PC-9 (cell line): ENCODE measurements at regions of chr1 and their contacts with region 1.

Region 1: DNA sequence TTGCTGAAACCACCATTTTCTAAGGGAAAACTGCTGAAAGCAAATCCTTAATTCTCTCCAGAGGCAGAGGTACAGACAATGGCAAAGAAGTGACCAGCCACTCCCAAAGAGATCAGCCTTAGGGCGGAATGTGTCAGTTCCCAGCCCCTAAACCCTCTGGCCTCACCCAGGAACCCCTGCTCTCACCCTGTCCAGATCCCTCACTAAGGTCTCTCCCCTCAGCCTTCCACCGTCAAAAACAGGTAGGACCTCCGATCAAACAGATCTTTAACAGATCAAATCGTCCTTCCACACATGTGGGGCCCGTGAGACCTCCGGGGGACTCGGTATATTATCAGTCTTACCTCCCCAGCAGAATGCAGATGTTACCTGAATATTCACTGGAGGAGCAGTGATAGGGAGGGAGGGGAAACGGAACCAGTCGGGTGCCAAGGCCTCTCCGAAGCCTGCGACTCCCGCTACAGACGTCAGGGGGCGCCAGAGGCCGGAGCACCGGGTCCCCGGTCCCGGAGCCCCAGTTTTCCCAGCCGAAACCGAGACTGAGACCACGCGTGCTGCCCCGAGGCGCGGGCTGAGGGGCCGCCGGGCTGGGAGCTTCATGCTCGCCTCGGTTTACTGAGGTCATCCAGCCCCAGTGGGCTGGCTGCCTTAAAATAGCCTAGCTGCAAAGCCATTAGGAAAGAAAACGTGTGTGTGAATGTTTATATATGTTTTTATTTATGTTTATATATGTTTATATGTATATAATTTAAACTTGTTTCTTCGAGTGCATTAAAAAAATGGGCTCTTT is 23.6 kb downstream of the GPA33 start:
- DNase-seq: peak; percentile 42 to 82
- H3K4me3 ChIP-seq: peak overlapping the region; percentile 55; the same call in 1 of the 2 replicates
- H3K27ac ChIP-seq: 0 out of 2 replicates have a peak overlapping the region, but pooled peaks have one; percentile 27
- H3K4me1 ChIP-seq: no peaks in the 10 kb centered on the region
- H3K27me3 ChIP-seq: no peaks in the 10 kb centered on the region
- CTCF ChIP-seq: peak; percentile 99

Region 2: GRCh38 chr1:167043752-167044488 is 22.6 kb before region 1 on chr1:
- CTCF ChIA-PET with region 1: no interaction called
- POLR2A ChIA-PET with region 1: no interaction called
- intact Hi-C with region 1: no loop called
- DNase-seq: peak; percentile 50 to 55
- H3K4me3 ChIP-seq: peak overlapping the region; percentile 47
- H3K27ac ChIP-seq: no peak overlapping the region
- H3K4me1 ChIP-seq: no peaks in the 10 kb centered on the region
- H3K27me3 ChIP-seq: peaks cover 15% of the 10 kb centered on the region
- CTCF ChIP-seq: no peak

Region 3: DNA sequence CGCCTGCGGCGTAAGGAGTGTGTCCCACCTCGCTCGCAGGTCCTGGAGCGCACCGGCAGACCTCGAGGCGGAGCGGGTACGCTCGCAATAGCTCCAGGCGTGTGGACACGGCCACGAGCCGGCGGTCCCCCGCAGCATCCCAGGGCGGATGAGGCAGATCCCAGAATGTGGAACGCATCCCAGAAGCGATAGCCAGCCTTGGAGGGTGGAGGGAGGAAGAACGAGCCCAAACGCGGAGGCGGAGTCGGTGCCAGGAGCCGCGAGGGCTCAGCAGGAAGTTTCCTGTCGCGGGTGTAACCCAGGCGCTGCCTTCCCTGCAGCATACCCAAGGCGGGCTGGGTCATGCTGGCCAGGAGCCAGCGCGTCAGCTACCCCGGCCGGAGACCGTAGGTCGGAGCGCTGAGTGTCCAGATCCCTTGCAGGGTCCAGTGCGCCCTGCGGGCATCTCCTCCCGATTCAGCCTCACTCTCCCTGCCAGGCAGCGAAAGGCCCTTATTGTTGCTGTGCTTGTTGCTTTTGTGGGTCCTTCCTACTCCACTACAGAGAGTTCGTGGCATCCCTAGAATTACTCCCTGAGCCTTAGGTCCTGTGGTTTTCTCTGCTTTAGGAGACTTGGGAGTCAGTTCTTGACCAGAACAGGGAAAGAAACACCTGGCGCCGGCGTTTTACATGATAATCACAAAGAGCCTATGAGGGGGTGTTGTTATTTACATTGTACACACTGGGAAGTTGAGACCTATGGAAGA is 55.0 kb after region 1 on chr1:
- CTCF ChIA-PET with region 1: interaction called, 10 read pairs
- POLR2A ChIA-PET with region 1: interaction called, 4 read pairs
- intact Hi-C with region 1: loop called (anchors 1 kb)
- DNase-seq: peak; percentile 76 to 88
- H3K4me3 ChIP-seq: peak overlapping the region; percentile 91
- H3K27ac ChIP-seq: peak overlapping the region; percentile 59
- H3K4me1 ChIP-seq: peaks cover 18% of the 10 kb centered on the region; the same call in 1 of the 2 replicates
- H3K27me3 ChIP-seq: no peaks in the 10 kb centered on the region
- CTCF ChIP-seq: no peak

Region 4: GRCh38 chr1:167270349-167271092 is 204.0 kb after region 1 on chr1:
- CTCF ChIA-PET with region 1: interaction called, 3 read pairs
- POLR2A ChIA-PET with region 1: no interaction called
- intact Hi-C with region 1: loop called (anchors 5 kb)
- DNase-seq: no peak
- H3K4me3 ChIP-seq: no peak overlapping the region
- H3K27ac ChIP-seq: no peak overlapping the region
- H3K4me1 ChIP-seq: no peaks in the 10 kb centered on the region
- H3K27me3 ChIP-seq: no peaks in the 10 kb centered on the region
- CTCF ChIP-seq: no peak

Region 5: GRCh38 chr1:167342846-167343245 is 276.3 kb after region 1 on chr1:
- CTCF ChIA-PET with region 1: no interaction called
- POLR2A ChIA-PET with region 1: no interaction called
- intact Hi-C with region 1: no loop called
- DNase-seq: no peak
- H3K4me3 ChIP-seq: no peak overlapping the region
- H3K27ac ChIP-seq: no peak overlapping the region
- H3K4me1 ChIP-seq: no peaks in the 10 kb centered on the region
- H3K27me3 ChIP-seq: no peaks in the 10 kb centered on the region
- CTCF ChIP-seq: peak; percentile 44; the same call in 1 of the 2 replicates

Region 6: DNA sequence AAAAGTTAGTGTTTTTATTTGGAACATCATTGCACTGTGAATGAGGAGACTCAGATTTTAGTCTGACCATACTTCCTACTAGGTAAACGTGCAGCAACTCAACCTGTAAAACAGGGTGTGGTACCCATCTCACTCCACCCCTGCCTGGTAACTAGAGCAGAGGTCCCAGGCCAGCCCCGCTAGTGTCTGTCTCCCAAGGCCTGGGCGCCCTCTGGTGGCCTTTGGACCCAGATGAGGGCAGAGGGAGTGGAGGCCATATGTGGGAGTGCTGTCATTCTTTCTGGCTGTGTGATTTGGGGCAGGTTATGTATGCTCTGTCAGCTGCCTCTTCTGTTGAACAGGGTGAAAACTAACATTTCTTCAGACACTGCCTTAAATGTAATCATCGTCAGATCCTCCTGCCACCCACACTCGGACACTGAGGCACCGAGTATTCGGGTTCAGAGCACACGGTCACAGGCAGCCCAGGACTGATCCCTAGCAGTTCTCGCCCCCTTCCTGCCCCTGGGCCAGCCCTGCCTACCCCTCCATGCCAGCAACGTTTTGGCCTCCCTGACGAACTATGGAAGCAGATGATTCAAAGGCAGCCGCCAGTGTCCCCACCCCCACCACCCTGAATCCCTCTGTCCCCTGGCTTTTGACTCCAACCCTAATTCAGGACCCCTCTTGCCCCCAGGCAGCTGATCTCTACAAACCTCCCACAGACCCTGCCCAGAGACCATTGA is 375.8 kb after region 1 on chr1:
- CTCF ChIA-PET with region 1: interaction called, 3 read pairs
- POLR2A ChIA-PET with region 1: no interaction called
- intact Hi-C with region 1: loop called (anchors 1 kb)
- DNase-seq: peak; percentile 92
- H3K4me3 ChIP-seq: 0 out of 2 replicates have a peak overlapping the region, but pooled peaks have one; percentile 3
- H3K27ac ChIP-seq: peak overlapping the region; percentile 52
- H3K4me1 ChIP-seq: peaks cover 21% of the 10 kb centered on the region
- H3K27me3 ChIP-seq: no peaks in the 10 kb centered on the region
- CTCF ChIP-seq: peak; percentile 91

Region 7: DNA sequence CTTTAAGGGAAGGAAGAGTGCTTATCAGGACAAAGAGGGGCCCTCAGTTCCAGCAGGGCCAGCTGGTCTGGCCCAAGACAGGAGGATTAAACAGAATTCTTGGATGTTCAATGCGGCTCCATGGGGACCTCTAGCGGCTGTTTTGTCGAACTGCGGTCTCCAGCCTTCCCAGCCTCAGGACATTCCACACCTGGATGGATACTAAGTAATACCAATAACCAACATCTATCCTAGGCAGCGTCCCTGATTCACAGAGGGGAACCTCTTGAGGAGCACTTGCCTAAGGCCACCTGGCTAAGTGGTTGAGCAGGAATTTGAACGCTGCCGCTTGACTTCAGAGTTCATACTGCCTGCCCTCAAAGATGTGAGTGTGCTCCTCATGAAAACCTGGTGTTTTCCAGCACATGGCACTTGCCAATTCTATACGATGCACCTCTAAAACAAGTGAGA is 467.3 kb after region 1 on chr1:
- CTCF ChIA-PET with region 1: interaction called, 3 read pairs
- POLR2A ChIA-PET with region 1: no interaction called
- intact Hi-C with region 1: loop called (anchors 5 kb)
- DNase-seq: peak; percentile 52 to 67
- H3K4me3 ChIP-seq: no peak overlapping the region
- H3K27ac ChIP-seq: no peak overlapping the region
- H3K4me1 ChIP-seq: no peaks in the 10 kb centered on the region
- H3K27me3 ChIP-seq: no peaks in the 10 kb centered on the region
- CTCF ChIP-seq: peak; percentile 91